Endothelial cell of umbilical vein (primary cell): ENCODE measurements at regions of chr4 and their contacts with region 1.

Region 1: GRCh38 chr4:166091912-166092510 is 219.0 kb downstream of the TLL1 start:
- DNase-seq: peak; percentile 43
- H3K4me3 ChIP-seq: no peak overlapping the region
- H3K27ac ChIP-seq: no peak overlapping the region
- H3K4me1 ChIP-seq: no peaks in the 10 kb centered on the region
- H3K27me3 ChIP-seq: no peaks in the 10 kb centered on the region
- CTCF ChIP-seq: peak; percentile 31 to 47
- POLR2A ChIP-seq: no peak

Region 2: GRCh38 chr4:165378745-165379677 is 713.0 kb before region 1 on chr4 and contains the start of gene CPE:
- CTCF ChIA-PET with region 1: no interaction called
- POLR2A ChIA-PET with region 1: no interaction called
- dilution Hi-C with region 1: no loop called
- intact Hi-C with region 1: loop called (anchors 10 kb)
- DNase-seq: peak; percentile 80
- H3K4me3 ChIP-seq: peak within 1 kb of the TSS; percentile 30 to 70 (median 49)
- H3K27ac ChIP-seq: no peak within 1 kb of the TSS
- H3K4me1 ChIP-seq: peaks cover 4% of the 10 kb centered on the region
- H3K27me3 ChIP-seq: peaks cover 2 to 4% of the 10 kb centered on the region in 2 experiments
- CTCF ChIP-seq: peak; percentile 37 to 89
- POLR2A ChIP-seq: no peak
- total RNA-seq, gene CPE: 8.1 and 9.2 TPM in 2 replicates

Region 3: GRCh38 chr4:165864271-165864670 is 227.7 kb before region 1 on chr4:
- CTCF ChIA-PET with region 1: interaction called, 10 read pairs
- POLR2A ChIA-PET with region 1: no interaction called
- dilution Hi-C with region 1: no loop called
- intact Hi-C with region 1: loop called (anchors 1 kb)
- DNase-seq: peak; percentile 36
- H3K4me3 ChIP-seq: no peak overlapping the region
- H3K27ac ChIP-seq: no peak overlapping the region
- H3K4me1 ChIP-seq: no peaks in the 10 kb centered on the region
- H3K27me3 ChIP-seq: no peaks in the 10 kb centered on the region
- CTCF ChIP-seq: peak in 1 of 2 donors; percentile 1
- POLR2A ChIP-seq: no peak